ENCODE measurements at regions of chr12 and their contacts with region 1.

Region 1: DNA sequence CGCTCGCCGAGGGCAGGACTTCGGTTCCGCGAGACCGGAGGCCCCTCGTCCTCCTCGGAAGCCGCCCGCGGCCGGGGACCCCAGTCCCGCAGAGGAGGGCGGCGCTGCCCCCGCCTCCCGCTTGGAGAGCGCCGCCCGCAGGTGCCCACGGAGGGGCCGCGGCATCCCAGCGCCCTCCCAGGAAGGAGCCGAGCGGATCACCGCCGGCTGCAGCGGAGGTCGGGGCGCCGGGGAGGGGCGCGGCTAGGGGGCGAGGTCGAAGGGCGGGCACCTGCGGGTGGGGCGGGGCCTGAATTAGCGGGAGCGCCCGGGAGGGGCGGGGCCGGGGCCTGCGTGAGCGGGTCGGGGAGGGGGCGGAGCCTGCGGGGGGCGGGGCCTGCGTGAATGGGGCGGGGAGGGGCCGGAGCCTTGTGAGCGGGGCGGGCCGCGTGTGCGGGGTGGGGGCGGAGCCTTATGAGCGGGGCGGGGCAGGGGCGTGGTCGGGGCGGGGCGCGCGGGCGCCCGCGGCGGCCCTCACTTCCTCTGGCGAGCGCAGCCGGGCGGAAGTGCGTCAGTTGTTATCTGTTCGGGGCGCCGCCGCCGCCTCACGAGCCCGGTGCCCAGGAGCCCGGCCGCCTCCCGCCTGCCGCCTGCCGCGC is at the start of gene FBRSL1:
- DNase-seq: peak; percentile 86
- H3K4me3 Mint-ChIP-seq: peak within 1 kb of the TSS; percentile 87
- H3K27ac Mint-ChIP-seq: peak within 1 kb of the TSS; percentile 90
- H3K4me1 Mint-ChIP-seq: peaks cover 45% of the 10 kb centered on the region
- H3K27me3 Mint-ChIP-seq: peaks cover 1% of the 10 kb centered on the region
- total RNA-seq, gene FBRSL1: 75.8 and 80.2 TPM in 2 replicates

Region 2: DNA sequence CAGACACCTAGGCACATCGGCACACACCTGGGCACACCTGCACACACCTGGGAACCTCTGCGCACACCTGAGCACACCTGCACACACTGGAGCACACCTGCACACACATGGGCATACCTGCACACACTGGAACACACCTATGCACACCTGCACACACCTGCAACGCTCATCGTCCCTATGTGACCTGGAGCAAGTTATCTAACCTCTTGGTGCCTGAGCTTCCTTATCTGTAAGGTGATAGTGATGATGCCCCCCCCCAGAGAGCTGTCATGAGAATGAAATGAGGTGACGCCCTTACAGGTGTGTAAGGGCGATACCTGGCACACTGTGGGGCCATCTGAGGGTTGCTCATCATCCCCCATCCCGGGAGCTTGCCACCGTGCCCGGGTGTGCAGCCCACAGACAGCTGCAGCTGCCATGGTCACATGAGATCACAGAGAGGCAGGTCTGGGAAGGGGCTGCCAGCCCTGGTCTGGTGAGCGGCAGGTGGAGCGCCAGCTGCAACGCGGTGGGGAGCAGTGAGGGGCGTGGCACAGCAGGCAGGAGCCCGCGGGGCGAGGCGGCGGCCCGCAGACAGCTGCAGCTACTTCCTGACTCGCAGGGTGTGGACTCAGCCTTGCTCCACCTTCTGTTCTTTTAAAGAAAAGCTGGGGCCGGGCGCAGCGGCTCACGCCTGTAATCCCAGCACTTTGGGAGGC is 59.6 kb before region 1 on chr12:
- intact Hi-C with region 1: loop called (anchors 1 kb)
- DNase-seq: peak; percentile 66
- H3K4me3 Mint-ChIP-seq: peak overlapping the region; percentile 62
- H3K27ac Mint-ChIP-seq: peak overlapping the region; percentile 40
- H3K4me1 Mint-ChIP-seq: peaks cover 25% of the 10 kb centered on the region
- H3K27me3 Mint-ChIP-seq: no peaks in the 10 kb centered on the region

Region 3: DNA sequence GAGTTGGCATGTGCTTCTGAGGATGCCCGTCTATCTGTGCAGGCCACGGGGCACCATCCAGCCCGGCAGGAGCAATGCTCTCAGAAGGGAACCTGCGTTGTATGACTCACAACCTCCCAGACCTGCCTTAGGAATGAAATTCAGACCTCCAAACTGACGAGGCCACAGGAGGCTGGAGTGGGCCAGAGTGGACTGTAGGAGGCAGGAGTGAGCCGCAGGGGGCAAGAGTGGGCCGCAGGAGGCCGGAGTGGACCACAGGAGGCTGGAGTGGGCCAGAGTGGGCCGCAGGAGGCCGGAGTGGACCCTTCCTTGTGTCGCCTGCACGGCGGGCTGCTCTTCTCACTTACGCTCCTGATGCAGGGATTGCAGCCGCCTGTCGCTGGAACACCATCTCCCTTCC is 10.9 kb before region 1 on chr12:
- intact Hi-C with region 1: loop called (anchors 1 kb)
- DNase-seq: no peak
- H3K4me3 Mint-ChIP-seq: no peak overlapping the region
- H3K27ac Mint-ChIP-seq: no peak overlapping the region
- H3K4me1 Mint-ChIP-seq: peaks cover 23% of the 10 kb centered on the region
- H3K27me3 Mint-ChIP-seq: peaks cover 2% of the 10 kb centered on the region

Region 4: GRCh38 chr12:132614861-132615578 is 125.3 kb after region 1 on chr12:
- intact Hi-C with region 1: loop called (anchors 1 kb)
- DNase-seq: peak; percentile 66
- H3K4me3 Mint-ChIP-seq: no peak overlapping the region
- H3K27ac Mint-ChIP-seq: no peak overlapping the region
- H3K4me1 Mint-ChIP-seq: peaks cover 8% of the 10 kb centered on the region
- H3K27me3 Mint-ChIP-seq: peaks cover 34% of the 10 kb centered on the region

Measured in activated T-helper 1 cell treated with anti-CD3 and anti-CD28 coated beads, Interleukin-12 subunit alpha, Interleukin-12 subunit beta, Interleukin-2, Interleukin-4 antibody, amounts not matched to agents 30 ng/mL and 10 ng/mL and 1 ng/mL, durations not matched to agents 14 hours and 24 hours and 36 hours (primary cell).